Ascending aorta (tissue), 2 donors: ENCODE measurements at regions of chr14 and their contacts with region 1.

Region 1: DNA sequence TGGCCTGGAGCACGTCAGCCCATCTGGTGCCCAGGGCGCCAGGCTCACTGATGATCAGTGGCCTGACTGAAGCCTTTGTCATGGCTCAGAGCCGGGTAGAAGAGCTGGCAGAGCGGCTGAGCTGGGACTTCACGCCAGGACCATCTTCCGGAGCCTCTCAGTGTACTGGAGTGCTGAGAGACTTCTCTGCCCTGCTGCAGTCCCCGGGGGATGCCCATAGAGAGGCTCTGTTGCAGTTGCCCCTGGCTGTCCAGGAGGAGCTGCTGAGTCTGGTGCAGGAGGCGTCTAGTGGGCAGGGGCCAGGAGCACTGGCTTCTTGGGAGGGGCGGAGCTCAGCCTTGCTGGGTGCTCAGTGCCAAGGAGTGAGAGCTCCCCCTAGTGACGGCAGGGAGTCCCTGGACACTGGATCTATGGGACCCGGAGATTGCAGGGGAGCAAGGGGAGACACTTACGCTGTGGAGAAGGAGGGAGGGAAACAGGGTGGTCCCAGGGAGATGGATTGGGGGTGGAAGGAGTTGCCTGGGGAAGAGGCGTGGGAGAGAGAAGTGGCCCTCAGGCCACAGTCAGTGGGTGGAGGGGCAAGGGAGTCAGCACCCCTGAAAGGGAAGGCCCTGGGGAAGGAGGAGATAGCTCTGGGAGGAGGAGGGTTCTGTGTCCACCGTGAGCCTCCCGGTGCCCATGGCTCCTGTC is 2.0 kb downstream of the KHNYN start:
- DNase-seq: peak; percentile 70 to 93
- H3K4me3 ChIP-seq: peak overlapping the region; percentile 78 to 92
- H3K27ac ChIP-seq: peak overlapping the region; percentile 88 to 96
- H3K4me1 ChIP-seq: peaks cover 5 to 27% of the 10 kb centered on the region in 2 donors
- H3K27me3 ChIP-seq: no peaks in the 10 kb centered on the region
- CTCF ChIP-seq: peak; percentile 84 to 92 (median 85)

Region 2: GRCh38 chr14:24036169-24036962 is 395.3 kb before region 1 on chr14:
- intact Hi-C with region 1: no loop called
- DNase-seq: peak; percentile 54 to 86
- H3K4me3 ChIP-seq: peak overlapping the region; percentile 58 to 69
- H3K27ac ChIP-seq: peak overlapping the region; percentile 89 to 90
- H3K4me1 ChIP-seq: peaks cover 0 to 2% of the 10 kb centered on the region in 2 donors
- H3K27me3 ChIP-seq: no peaks in the 10 kb centered on the region
- CTCF ChIP-seq: peak; percentile 75 to 83 (median 75)

Region 3: DNA sequence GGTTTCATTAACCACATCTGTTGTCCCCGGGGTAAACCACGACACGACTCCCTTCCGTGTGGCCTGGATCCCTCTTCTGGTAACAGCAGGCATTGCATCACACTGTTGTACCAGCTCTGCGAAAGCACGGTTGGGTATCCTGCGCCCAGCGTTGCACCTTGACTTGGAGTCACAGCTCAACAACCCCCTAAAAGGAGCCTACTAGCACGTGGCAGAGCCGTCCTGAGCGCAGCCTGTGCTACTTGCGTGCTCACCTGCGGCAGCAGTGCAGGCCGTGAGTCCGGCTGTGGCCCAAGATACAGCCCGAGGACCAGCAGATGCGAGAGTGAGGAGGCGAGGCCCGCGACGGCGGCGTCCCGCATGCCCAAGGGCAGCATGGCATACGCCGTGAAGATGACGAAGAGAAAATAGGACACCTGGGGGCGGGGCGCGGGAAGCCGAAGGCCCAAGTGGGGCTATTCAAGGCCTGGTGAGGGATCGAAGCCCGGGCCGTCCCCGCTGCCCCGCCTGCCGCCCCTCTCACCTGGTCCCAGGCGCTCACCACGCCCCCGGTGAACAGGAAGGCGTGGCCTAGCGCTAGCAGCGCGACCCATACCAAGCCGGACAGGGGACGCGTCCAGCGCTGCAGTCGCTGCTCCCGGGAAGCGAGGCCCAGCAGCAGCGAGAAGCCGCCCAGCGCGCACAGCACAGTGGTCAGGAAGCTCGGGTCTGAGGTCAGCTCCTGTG is 99.3 kb before region 1 on chr14:
- intact Hi-C with region 1: loop called (anchors 1 kb)
- DNase-seq: peak in 1 of 2 donors; percentile 86
- H3K4me3 ChIP-seq: peak overlapping the region; percentile 42 to 53
- H3K27ac ChIP-seq: no peak overlapping the region
- H3K4me1 ChIP-seq: peaks cover 7 to 20% of the 10 kb centered on the region in 2 donors
- H3K27me3 ChIP-seq: peaks cover 12% of the 10 kb centered on the region
- CTCF ChIP-seq: peak; percentile 61 to 77 (median 74)

Region 4: DNA sequence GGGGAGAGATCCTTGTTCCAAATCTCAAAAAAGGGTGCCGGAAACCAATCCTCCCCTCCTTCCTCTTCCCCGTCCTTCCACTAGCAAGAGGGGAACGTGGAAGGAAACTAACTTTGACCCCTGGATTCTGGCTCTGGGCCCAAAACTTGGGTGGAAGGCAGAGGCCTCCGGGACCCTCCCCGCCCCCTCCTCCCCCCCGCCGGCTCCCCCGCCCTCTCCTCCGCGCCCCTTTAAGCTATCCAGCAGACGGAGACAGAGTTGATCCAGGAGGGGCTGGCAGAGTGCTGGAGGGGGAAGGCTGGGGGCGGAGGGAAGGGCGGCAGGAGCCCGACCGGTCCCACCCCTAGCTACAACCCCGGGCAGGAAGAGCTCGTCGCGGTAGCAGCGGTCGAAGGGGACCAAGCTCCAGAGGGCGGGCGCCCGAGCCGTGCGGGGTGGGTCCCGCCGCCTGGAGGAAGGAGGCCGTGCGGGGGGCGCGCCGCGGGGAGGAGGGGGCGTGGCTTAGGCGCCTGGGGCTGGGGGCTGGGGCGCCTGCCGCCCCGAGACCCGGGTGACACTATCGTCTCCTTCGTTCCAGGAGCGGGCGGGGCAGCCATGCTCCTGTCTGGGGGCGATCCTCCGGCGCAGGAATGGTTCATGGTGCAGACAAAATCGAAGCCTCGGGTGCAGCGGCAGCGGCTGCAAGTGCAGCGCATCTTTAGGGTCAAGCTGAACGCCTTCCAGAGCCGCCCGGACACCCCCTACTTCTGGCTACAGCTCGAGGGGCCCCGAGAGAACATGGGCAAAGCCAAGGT is 32.9 kb before region 1 on chr14 and contains the start of gene NYNRIN:
- intact Hi-C with region 1: loop called (anchors 2 kb)
- DNase-seq: peak in 1 of 2 donors; percentile 74
- H3K4me3 ChIP-seq: peak within 1 kb of the TSS; percentile 73 to 76
- H3K27ac ChIP-seq: peak within 1 kb of the TSS; percentile 47 to 59
- H3K4me1 ChIP-seq: peaks cover 2 to 8% of the 10 kb centered on the region in 2 donors
- H3K27me3 ChIP-seq: no peaks in the 10 kb centered on the region
- CTCF ChIP-seq: no peak
- total RNA-seq, gene NYNRIN: 23.1 TPM

Region 5: GRCh38 chr14:24442273-24443052 is 10.7 kb after region 1 on chr14 and contains the start of gene SDR39U1:
- intact Hi-C with region 1: loop called (anchors 1 kb)
- DNase-seq: peak; percentile 93 to 99
- H3K4me3 ChIP-seq: peak within 1 kb of the TSS; percentile 84 to 86
- H3K27ac ChIP-seq: peak within 1 kb of the TSS; percentile 100
- H3K4me1 ChIP-seq: peaks cover 0 to 15% of the 10 kb centered on the region in 2 donors
- H3K27me3 ChIP-seq: no peaks in the 10 kb centered on the region
- CTCF ChIP-seq: no peak
- total RNA-seq, gene SDR39U1: 98.3 TPM

Region 6: GRCh38 chr14:24518851-24519250 is 87.1 kb after region 1 on chr14:
- intact Hi-C with region 1: no loop called
- DNase-seq: no peak
- H3K4me3 ChIP-seq: no peak overlapping the region
- H3K27ac ChIP-seq: no peak overlapping the region
- H3K4me1 ChIP-seq: no peaks in the 10 kb centered on the region
- H3K27me3 ChIP-seq: no peaks in the 10 kb centered on the region
- CTCF ChIP-seq: no peak